Activated CD4-positive, alpha-beta memory T cell treated with anti-CD3 and anti-CD28 coated beads for 36 hours (primary cell): ENCODE measurements at regions of chr5 and their contacts with region 1.

Region 1: DNA sequence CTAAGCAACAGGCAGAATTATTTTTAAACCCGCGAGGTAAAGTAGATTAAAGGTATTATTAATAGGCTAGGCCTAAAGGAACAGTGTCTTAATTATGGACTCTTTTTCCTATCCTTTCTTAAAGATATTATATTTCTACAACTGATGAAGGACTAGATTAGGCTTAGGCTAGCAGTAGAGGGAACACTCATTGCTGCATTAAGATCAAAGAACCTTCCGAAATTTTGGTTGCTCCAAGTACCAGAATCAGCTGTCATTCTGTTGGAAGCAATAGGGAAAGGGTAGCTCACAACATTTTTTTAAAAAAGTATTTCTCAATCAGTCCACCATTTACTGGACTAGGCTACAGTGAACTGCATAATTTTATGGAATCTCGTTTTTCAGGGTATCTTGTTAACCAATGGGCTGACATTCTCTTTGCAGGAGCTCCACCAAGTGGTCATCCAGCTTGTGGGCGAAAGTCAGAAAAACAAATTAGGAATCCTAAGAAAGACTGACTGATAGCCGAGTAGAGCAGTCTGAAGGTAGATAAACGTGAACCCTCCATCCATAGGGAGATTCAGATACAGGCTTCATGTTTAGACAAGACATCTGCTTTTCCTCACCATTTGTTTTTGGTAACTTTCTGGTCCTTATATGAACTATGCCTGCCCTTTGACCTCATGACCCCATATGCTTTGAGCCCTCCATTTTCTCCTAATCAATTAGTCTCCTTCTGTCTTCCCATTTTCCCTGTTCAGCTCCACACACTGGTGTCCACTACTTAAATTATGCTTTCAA is 103.6 kb upstream of the CHD1 start:
- DNase-seq: peak; percentile 55
- H3K4me3 Mint-ChIP-seq: peak overlapping the region; percentile 73
- H3K27ac Mint-ChIP-seq: peak overlapping the region; percentile 71
- H3K4me1 Mint-ChIP-seq: peaks cover 77% of the 10 kb centered on the region
- H3K27me3 Mint-ChIP-seq: no peaks in the 10 kb centered on the region

Region 2: DNA sequence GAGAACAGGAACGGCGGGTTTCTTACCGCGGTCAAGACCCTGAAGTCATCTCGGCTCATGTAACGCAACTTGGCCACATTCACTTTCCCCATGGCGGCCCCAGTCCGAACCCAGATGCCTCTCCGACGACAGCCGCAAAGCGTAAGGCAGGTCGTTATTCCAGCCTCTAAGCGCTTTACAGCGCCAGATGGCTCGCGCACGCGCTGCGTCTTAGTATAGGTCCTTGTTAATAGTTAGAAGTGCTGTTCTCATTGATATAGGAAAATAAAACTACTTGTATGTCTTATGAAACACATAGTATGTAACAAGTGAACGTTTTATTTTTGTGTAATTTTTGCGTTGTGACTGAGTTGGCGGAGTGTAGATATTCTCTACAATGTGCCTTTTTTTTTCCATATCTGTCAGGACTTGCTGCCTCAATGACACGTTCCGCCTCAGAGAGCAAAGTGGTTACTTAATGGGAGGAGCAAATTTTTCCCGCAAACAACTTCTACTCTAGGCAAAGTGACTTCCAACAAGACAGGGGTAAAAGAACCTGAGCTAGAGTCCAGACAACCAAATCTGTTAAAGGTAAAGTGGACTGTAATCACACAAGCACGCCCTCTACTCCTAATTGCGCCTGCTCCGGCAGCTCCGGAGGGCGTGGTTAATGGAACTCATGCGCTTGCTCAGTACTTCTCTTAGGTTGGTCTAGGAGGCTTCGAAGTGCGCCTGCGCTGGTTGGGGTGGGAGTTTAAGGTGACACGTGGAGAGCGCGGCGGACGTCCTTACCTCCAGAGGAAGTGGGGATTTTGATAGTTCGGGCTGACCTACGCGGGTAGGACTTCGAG is 1849.1 kb before region 1 on chr5 and contains the start of gene RIOK2:
- CTCF ChIA-PET with region 1: no interaction called
- POLR2A ChIA-PET with region 1: no interaction called
- intact Hi-C with region 1: loop called (anchors 5 kb)
- DNase-seq: peak; percentile 96
- H3K4me3 Mint-ChIP-seq: peak within 1 kb of the TSS; percentile 87
- H3K27ac Mint-ChIP-seq: peak within 1 kb of the TSS; percentile 98
- H3K4me1 Mint-ChIP-seq: peaks cover 34% of the 10 kb centered on the region
- H3K27me3 Mint-ChIP-seq: no peaks in the 10 kb centered on the region
- total RNA-seq, gene RIOK2: 31.8 to 41.5 TPM

Region 3: DNA sequence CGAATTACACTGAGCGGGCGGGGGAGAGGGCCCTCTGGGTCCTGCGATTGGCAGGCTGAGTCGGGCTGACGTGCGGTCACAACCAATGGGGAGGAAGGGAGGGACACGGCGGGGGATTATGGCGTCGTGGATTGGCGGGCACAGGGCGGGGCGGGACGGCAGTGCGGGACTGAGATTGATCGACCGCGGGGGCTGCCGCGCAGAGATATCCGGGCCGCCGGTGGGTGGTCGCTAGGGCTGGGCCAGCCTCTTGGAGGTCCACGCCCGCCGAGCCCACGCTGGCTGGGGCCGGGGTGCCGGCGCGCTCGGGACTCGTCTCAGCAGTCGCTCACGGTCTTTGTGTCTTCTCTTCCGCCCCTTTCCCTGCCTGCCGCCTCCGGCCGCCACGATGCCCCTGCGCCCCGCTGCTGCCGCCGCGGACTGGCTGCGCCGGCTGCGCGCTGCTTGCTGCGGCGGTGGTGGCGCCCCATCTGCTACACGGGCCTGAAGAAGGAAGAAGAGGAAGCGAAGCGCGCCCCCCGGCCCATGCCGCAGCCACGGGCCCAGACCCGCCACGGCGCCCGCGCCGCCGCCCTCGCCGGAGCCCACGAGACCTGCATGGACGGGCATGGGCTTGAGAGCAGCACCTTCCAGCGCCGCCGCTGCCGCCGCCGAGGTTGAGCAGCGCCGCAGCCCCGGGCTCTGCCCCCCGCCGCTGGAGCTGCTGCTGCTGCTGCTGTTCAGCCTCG is 258.8 kb before region 1 on chr5 and contains the start of gene RGMB:
- CTCF ChIA-PET with region 1: interaction called, 7 read pairs
- POLR2A ChIA-PET with region 1: no interaction called
- intact Hi-C with region 1: loop called (anchors 2 kb)
- DNase-seq: peak; percentile 95
- H3K4me3 Mint-ChIP-seq: peak within 1 kb of the TSS; percentile 91
- H3K27ac Mint-ChIP-seq: peak within 1 kb of the TSS; percentile 50
- H3K4me1 Mint-ChIP-seq: peaks cover 45% of the 10 kb centered on the region
- H3K27me3 Mint-ChIP-seq: peaks cover 21% of the 10 kb centered on the region
- total RNA-seq, gene RGMB: 3.3 to 3.8 TPM

Region 4: DNA sequence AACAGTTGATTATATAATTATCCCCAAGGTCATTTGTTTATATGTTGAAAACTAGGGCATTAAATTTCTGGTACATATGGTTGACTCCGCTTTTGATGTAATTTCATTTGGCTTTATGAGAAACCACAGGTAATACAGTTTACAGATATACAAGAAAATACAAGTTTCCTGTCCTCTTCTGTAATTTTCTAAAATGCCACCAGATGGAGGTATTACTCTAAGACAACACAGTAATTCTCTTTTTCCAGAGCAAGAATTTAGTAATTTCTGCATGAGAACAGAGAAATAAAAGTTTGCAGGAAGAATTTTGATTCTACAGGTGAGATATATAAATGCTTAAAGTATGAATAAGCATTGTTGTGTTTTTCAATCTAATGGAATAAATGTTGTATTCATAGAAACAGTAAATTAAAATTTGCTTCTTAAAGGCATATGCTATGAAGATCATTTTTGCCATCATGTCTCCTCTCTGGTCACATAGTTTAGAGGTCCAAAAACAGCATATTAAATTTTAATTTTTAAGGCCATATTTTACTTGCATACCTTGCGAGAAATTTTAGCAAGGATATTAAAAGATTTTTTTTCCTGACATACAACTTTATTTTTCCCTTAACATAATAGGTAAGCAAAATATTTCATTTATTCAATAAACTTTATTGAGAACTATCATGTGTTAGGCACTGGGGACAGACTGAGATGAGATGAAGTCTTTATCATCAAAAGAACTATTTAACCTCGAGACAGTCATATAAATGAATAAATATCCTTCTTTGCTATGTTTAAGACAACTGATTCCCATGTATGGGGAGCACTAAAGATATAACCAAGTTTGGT is 126.3 kb before region 1 on chr5:
- CTCF ChIA-PET with region 1: interaction called, 17 read pairs
- POLR2A ChIA-PET with region 1: no interaction called
- intact Hi-C with region 1: loop called (anchors 1 kb)
- DNase-seq: no peak
- H3K4me3 Mint-ChIP-seq: no peak overlapping the region
- H3K27ac Mint-ChIP-seq: no peak overlapping the region
- H3K4me1 Mint-ChIP-seq: peaks cover 58% of the 10 kb centered on the region
- H3K27me3 Mint-ChIP-seq: no peaks in the 10 kb centered on the region

Region 5: DNA sequence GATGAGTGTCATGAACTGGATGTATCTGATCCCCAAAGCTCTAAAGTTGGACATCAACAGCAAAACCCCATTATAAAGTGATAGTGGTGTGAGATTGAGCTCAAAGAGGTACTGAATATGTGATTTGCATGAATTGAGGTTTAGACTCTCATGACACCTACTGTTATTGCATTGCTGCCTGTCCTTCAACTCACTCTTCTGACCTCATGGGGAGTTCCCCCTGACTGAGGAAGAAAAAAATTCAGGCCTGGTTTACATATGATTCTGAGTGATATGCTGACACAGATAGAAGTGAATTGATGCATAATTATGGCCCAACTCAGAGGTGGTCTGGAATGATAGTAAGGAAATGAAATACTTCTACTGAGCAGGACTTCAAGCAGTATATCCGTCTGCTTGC is 27.5 kb before region 1 on chr5:
- CTCF ChIA-PET with region 1: interaction called, 4 read pairs
- POLR2A ChIA-PET with region 1: no interaction called
- intact Hi-C with region 1: loop called (anchors 1 kb)
- DNase-seq: peak; percentile 35
- H3K4me3 Mint-ChIP-seq: no peak overlapping the region
- H3K27ac Mint-ChIP-seq: no peak overlapping the region
- H3K4me1 Mint-ChIP-seq: peaks cover 16% of the 10 kb centered on the region
- H3K27me3 Mint-ChIP-seq: no peaks in the 10 kb centered on the region